ENCODE measurements at regions of chr16 and their contacts with region 1.

Region 1: DNA sequence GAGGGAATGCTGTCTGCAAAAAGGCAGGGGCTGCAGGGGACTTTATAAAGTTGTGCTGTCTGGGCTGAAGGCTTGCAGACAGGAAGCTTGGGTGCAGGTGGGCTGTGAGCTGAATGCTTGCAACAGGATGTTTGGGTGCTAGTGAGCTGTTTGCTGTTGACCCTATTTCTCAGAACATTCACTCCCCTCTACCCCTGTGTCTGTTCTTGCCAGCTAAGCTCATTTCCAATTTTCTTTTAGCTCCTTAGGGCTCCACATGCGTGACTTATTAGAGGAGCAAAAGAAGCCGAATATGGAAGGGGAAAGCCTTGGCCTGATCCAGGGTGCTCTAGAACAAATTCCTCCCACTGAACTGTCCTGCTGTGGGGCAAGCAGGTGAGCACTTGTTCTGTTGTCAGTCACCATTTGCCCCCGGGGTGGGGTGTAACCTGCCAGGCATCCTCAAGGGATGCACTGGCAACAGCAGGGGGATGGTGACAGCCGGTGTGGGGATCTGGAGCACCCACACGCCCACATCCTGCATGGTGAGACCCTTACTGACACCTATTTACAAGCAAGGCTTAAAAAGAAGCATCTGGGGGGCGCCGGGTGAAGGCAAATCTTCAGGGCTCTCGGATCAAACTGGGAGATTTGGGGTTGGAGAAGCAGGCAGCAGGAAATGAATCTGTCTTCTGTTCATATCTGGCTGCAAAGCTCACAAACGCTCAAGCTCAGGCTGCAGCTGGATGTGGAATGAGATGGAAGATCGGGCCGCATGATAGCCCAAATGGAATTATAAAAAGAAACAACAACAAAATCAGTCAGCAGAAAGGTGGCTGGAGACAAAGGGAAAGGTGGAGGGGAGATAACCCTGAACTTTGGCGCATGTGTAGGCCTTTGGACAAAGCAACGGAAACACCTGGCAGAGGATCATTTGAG is 21.1 kb upstream of the NUP93 start:
- DNase-seq: peak in 13 of 14 experiments; percentile 10 to 63 (median 41)
- ATAC-seq: peak; percentile 90
- H3K4me3 ChIP-seq: peak overlapping the region; percentile 35
- H3K4me3 Mint-ChIP-seq: peak overlapping the region; percentile 83
- H3K27ac ChIP-seq: peak overlapping the region in 1 of 2 donors; percentile 50
- H3K27ac Mint-ChIP-seq: peak overlapping the region; percentile 92
- H3K4me1 ChIP-seq: peaks cover 26% of the 10 kb centered on the region
- H3K4me1 Mint-ChIP-seq: peaks cover 28% of the 10 kb centered on the region
- H3K27me3 ChIP-seq: no peaks in the 10 kb centered on the region
- H3K27me3 Mint-ChIP-seq: no peaks in the 10 kb centered on the region
- CTCF ChIP-seq: no peak

Region 2: GRCh38 chr16:55944377-55944802 is 764.4 kb before region 1 on chr16:
- CTCF ChIA-PET with region 1: no interaction called
- POLR2A ChIA-PET with region 1: no interaction called
- intact Hi-C with region 1: loop called (anchors 2 to 10 kb)
- DNase-seq: peak; percentile 21 to 70 (median 34)
- ATAC-seq: peak; percentile 37
- H3K4me3 ChIP-seq: no peak overlapping the region
- H3K4me3 Mint-ChIP-seq: no peak overlapping the region
- H3K27ac ChIP-seq: no peak overlapping the region
- H3K27ac Mint-ChIP-seq: no peak overlapping the region
- H3K4me1 ChIP-seq: no peaks in the 10 kb centered on the region
- H3K4me1 Mint-ChIP-seq: no peaks in the 10 kb centered on the region
- H3K27me3 ChIP-seq: peaks cover 14 to 21% of the 10 kb centered on the region in 2 experiments
- H3K27me3 Mint-ChIP-seq: peaks cover 71% of the 10 kb centered on the region
- CTCF ChIP-seq: peak; percentile 81

Region 3: DNA sequence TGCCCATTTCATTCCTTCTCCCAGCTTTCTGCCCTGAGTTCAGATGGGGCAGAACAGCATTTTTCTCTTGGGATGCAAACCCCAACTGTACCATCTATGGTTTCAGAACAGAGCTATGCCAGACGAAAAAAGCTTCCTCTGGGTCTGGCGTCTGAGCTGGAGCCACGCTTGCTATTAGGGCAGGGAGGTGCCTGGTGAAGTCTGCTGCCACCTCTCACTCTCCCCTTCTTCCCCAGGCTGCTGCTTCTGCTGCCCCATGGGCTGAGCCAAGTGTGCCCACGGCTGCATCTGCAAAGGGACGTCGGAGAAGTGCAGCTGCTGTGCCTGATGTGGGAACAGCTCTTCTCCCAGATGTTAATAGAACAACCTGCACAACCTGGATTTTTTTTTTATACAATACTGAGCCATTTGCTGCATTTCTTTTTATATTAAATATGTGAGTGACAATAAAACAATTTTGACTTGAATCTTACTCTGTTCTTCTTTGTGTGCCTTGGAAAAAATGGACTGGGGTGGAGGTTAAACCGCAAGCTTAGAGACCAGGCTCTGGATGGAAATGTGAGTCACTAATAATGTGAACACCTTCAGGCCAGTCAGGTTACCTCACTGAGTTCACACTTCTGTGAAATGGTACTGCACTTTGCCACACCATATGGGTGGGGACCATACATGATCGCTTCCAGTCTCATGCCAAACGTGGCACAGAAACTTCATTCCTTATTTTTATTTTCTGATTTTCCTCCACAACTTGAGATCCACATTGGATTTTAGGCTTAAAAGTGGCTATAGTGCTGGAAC is 72.0 kb before region 1 on chr16:
- CTCF ChIA-PET with region 1: no interaction called
- POLR2A ChIA-PET with region 1: no interaction called
- intact Hi-C with region 1: no loop called
- DNase-seq: no peak
- ATAC-seq: no peak
- H3K4me3 ChIP-seq: no peak overlapping the region
- H3K4me3 Mint-ChIP-seq: no peak overlapping the region
- H3K27ac ChIP-seq: no peak overlapping the region
- H3K27ac Mint-ChIP-seq: no peak overlapping the region
- H3K4me1 ChIP-seq: peaks cover 47% of the 10 kb centered on the region
- H3K4me1 Mint-ChIP-seq: peaks cover 50% of the 10 kb centered on the region
- H3K27me3 ChIP-seq: peaks cover 69 to 82% of the 10 kb centered on the region in 2 experiments
- H3K27me3 Mint-ChIP-seq: peaks cover 92% of the 10 kb centered on the region
- CTCF ChIP-seq: no peak

Region 4: GRCh38 chr16:56675685-56676210 is 33.0 kb before region 1 on chr16:
- CTCF ChIA-PET with region 1: no interaction called
- POLR2A ChIA-PET with region 1: no interaction called
- intact Hi-C with region 1: no loop called
- DNase-seq: peak in 12 of 14 experiments; percentile 22 to 63 (median 42)
- ATAC-seq: peak; percentile 89
- H3K4me3 ChIP-seq: peak overlapping the region; percentile 48
- H3K4me3 Mint-ChIP-seq: peak overlapping the region; percentile 84
- H3K27ac ChIP-seq: no peak overlapping the region
- H3K27ac Mint-ChIP-seq: peak overlapping the region; percentile 30
- H3K4me1 ChIP-seq: peaks cover 12% of the 10 kb centered on the region
- H3K4me1 Mint-ChIP-seq: peaks cover 23% of the 10 kb centered on the region
- H3K27me3 ChIP-seq: peaks cover 5 to 12% of the 10 kb centered on the region in 2 experiments
- H3K27me3 Mint-ChIP-seq: peaks cover 46% of the 10 kb centered on the region
- CTCF ChIP-seq: no peak

Region 5: GRCh38 chr16:56691885-56692284 is 16.9 kb before region 1 on chr16:
- CTCF ChIA-PET with region 1: no interaction called
- POLR2A ChIA-PET with region 1: no interaction called
- intact Hi-C with region 1: no loop called
- DNase-seq: no peak
- ATAC-seq: no peak
- H3K4me3 ChIP-seq: no peak overlapping the region
- H3K4me3 Mint-ChIP-seq: no peak overlapping the region
- H3K27ac ChIP-seq: no peak overlapping the region
- H3K27ac Mint-ChIP-seq: no peak overlapping the region
- H3K4me1 ChIP-seq: no peaks in the 10 kb centered on the region
- H3K4me1 Mint-ChIP-seq: no peaks in the 10 kb centered on the region
- H3K27me3 ChIP-seq: no peaks in the 10 kb centered on the region
- H3K27me3 Mint-ChIP-seq: no peaks in the 10 kb centered on the region
- CTCF ChIP-seq: no peak

Measured in CD4-positive, alpha-beta T cell (primary cell).